ENCODE measurements at regions of chr12 and their contacts with region 1.

Region 1: DNA sequence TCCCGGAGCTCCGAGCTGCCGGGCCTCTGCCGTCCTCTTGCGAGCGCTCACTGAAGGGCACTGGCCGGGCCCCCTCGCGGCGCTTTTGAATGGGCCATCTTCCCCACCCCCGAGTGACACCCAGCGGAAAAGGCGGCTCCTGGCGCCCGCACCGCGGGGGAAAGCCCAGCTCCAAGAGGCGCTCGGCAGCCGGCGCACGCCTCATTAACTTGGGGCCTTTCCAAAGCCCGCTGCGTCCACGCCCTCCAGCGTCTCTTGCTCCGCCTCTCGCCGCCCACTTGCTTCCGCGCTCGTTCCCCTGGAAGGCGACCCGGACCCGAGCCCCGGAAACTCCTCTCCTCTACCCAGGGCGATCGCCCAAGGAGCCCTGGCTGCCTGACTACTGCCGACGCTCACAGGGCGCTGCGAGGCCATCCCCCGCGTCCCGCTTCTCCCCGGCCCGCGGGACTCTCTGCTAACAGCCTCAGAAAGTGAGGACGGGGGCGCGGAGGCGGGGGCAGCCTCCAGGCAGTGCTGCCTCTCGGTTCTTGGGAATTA is at the start of gene PHLDA1:
- DNase-seq: peak; percentile 96
- ATAC-seq: peak; percentile 95
- total RNA-seq, gene PHLDA1: 6.6 TPM

Region 2: DNA sequence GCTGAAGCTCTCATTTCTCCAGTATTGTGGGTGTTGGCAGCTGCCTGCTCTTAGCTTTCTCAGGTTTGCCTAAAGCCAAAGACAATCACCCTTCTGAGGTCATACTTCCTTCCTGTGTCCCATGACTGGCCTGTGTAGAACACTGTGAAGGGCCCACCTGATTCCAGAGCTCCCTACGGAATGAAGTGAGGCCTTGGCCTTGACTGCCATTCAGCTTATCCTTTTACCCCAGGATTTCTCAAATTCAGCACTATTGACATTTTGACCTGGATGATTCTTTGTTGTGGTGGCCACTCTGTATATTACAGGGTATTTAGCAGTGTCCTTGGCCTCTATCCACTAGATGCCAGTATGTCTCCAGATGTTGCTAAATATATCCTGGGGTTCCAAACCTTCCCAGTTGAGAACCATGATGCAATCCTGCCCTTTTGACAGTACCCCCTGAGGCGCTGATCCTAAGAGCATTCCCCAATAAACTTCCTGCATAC is 407.9 kb before region 1 on chr12:
- intact Hi-C with region 1: loop called (anchors 10 kb)
- DNase-seq: no peak
- ATAC-seq: peak; percentile 91

Region 3: GRCh38 chr12:75635606-75636410 is 395.8 kb before region 1 on chr12:
- intact Hi-C with region 1: no loop called
- DNase-seq: no peak
- ATAC-seq: no peak

Region 4: GRCh38 chr12:75705749-75706711 is 325.6 kb before region 1 on chr12:
- intact Hi-C with region 1: loop called (anchors 10 kb)
- DNase-seq: peak; percentile 51
- ATAC-seq: peak; percentile 85

Region 5: DNA sequence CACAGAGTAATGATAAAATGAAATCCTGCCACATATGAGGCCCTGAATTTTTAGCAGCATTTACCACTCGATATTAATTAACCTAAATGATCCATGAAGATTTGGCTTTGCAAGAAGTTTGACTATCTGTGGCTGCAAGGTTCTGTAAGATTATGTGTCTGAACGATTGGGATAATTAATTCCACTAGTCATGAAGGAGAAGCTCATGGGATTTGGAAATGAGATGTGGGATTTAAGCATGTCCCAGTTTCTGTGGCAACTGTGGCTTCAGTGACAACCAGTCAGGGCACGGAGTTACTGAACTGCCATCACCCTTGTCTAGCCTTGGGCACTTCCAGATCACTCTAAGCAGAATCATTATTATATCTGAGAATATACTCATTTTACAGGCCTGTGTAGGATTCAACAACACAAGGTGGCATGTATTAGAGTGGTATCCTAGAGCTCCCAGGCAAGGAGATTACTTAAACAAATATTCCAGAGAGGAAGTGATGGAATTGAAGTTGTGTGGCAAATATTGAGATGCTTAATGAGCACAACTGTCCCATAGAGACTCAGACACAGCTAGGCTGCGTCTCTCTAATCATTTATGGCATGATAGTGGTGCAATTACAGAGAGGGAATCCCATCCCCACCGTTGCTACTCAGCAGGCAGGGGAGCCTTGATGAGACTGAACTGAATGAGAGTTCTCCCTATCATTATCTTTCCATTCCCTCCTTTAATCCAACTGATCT is 315.1 kb before region 1 on chr12:
- intact Hi-C with region 1: no loop called
- DNase-seq: no peak
- ATAC-seq: no peak

Region 6: GRCh38 chr12:75814851-75815754 is 216.5 kb before region 1 on chr12:
- intact Hi-C with region 1: loop called (anchors 10 kb)
- DNase-seq: no peak
- ATAC-seq: peak; percentile 92

Region 7: DNA sequence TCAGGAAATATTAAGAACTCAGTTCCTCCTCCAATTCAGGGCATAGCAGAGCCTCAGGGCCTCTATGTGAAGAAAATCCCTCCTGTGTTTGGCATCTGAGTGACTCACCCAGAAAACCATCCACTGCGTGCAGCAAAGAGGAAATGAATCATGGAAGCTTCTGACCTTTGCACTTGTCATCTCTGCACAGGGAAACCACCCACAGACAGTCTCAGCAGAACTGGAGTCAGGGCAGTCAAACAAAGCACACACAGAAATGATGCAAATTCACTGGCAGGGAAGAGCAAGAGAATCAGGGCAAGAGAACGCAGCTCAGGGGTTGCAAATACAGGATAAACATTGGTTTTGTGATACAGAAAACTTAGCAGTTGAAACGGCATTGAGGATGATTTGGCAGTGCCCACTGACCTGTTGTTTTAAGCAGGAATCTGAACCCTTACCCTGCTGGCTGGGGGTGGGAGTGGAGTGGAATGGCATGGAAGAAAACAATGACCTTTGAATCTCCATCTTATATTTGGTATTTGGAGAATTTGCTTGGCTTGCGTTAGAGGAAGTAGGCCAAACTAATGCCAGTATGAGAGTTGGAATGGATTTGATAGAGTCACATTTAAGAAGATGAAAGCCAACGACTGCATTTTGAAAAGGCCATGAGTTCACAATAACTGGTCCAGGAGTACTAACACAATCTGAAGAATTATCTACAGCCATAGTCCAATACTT is 53.5 kb before region 1 on chr12:
- intact Hi-C with region 1: no loop called
- DNase-seq: no peak
- ATAC-seq: peak; percentile 85

Region 8: DNA sequence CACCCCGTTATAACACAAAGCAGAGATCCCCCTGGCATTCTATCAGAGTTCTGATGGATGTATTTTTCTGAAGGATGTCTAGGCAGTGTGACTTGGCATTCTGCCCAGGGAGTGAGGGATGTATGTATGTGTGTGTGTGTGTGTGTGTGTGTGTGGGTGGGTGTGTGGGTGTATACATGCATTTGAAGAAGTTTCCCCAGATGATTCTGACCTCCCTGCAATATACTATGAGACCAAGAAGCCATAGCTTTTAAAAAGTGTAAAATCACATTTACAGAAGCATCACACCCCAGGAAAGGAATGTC is 112.6 kb after region 1 on chr12:
- intact Hi-C with region 1: no loop called
- DNase-seq: no peak
- ATAC-seq: no peak

Measured in Right ventricle myocardium superior (tissue), 1 donor.